Right ventricle myocardium inferior (tissue), 1 donor: ENCODE measurements at regions of chr14 and their contacts with region 1.

Region 1: GRCh38 chr14:90256354-90257131 is at the start of gene PSMC1:
- DNase-seq: peak; percentile 94
- ATAC-seq: peak; percentile 98
- total RNA-seq, gene PSMC1: 125 TPM

Region 2: GRCh38 chr14:89954070-89955028 is 302.2 kb before region 1 on chr14 and contains the start of gene EFCAB11:
- intact Hi-C with region 1: loop called (anchors 10 kb)
- DNase-seq: peak; percentile 98
- ATAC-seq: peak; percentile 96
- total RNA-seq, gene EFCAB11: 3.5 TPM

Region 3: GRCh38 chr14:90461425-90461824 is 204.9 kb after region 1 on chr14:
- intact Hi-C with region 1: no loop called
- DNase-seq: no peak
- ATAC-seq: no peak